PC-9 (cell line): ENCODE measurements at regions of chr2 and their contacts with region 1.

Region 1: DNA sequence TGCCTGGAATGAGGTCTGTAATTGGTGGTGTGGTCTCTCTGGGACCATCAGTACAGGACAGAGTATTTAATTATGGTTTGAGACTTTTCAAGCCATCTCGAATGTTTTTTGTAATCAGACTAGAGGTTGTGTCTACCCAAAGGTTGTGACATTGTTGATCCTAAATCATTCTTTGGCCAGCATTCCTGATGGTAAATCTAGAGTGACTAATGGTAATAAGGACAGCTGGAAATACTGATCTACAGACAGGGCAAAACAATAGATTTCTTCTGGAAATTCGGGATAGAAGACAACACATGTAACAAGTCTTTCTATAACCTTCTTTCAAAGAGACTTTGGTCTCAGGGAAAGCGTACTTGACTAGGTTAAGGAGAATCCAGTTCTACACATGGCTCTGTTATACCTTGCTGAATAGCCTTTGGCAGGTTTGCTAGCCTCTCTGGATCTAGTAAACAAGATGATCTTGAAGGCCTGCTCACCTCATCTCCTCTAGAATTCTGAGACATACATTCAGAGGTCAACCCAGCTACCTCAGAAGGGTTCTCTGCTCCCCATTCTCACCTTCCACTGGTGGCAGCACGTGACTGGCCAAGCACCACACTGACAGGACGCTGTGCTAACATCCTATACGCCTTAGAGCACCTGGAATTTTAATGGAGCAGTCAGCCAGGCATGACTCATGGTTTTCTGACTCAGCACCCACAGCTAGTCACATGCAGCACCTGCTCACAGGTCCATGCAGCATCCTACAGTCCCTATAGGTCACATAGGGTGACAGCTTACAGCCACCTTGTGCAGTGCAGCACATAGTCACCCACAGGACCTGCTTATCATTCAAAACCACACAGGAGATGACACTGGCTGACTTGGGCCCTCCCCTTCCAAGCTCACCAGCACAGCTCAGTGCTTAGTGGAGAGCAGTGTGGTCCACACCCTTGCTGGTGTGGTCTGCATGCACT is 12.2 kb downstream of the PLB1 start:
- DNase-seq: peak; percentile 76 to 97
- H3K4me3 ChIP-seq: no peak overlapping the region
- H3K27ac ChIP-seq: peak overlapping the region; percentile 42
- H3K4me1 ChIP-seq: peaks cover 19% of the 10 kb centered on the region
- H3K27me3 ChIP-seq: no peaks in the 10 kb centered on the region
- CTCF ChIP-seq: no peak

Region 2: GRCh38 chr2:28406276-28407096 is 101.6 kb before region 1 on chr2:
- CTCF ChIA-PET with region 1: no interaction called
- POLR2A ChIA-PET with region 1: no interaction called
- intact Hi-C with region 1: loop called (anchors 5 kb)
- DNase-seq: peak in 1 of 2 experiments; percentile 84
- H3K4me3 ChIP-seq: no peak overlapping the region
- H3K27ac ChIP-seq: peak overlapping the region; percentile 23; the same call in 1 of the 2 replicates
- H3K4me1 ChIP-seq: no peaks in the 10 kb centered on the region
- H3K27me3 ChIP-seq: no peaks in the 10 kb centered on the region
- CTCF ChIP-seq: no peak

Region 3: DNA sequence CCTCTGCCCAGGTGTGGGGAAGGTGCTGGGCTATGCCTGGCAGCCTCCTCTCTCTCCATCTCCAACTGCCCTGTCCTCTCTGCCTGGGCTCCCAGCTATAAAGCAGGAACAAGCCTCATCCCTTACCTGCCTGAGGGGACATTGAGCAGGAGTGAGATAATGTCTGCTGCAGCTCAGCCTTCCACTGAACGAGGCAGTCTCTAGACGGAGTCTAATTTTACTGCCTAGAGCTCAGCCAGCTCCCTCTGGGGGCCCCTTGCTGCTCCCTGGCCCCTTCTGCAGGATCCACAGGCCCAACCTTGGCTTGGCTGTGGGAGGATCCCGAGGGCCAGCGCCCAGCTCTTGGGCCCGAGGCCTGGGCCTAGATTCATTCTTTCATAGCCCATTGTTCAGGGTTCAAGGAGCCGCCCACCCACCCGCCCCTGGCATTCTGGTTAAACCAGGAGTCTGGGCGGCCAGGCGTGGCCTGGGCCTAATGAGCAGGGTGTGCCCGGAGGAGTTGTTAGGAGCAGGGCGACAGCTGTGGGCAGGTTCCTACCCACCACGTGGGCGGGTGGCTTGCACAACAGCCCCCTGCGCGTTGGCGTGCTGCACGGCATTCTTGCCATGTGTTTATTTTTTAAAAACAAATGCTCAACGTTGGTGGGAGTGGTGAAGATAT is 70.8 kb before region 1 on chr2:
- CTCF ChIA-PET with region 1: no interaction called
- POLR2A ChIA-PET with region 1: no interaction called
- intact Hi-C with region 1: loop called (anchors 2 kb)
- DNase-seq: peak; percentile 82 to 90
- H3K4me3 ChIP-seq: peak overlapping the region; percentile 27; the same call in 1 of the 2 replicates
- H3K27ac ChIP-seq: peak overlapping the region; percentile 93
- H3K4me1 ChIP-seq: peaks cover 39% of the 10 kb centered on the region
- H3K27me3 ChIP-seq: no peaks in the 10 kb centered on the region
- CTCF ChIP-seq: no peak

Region 4: DNA sequence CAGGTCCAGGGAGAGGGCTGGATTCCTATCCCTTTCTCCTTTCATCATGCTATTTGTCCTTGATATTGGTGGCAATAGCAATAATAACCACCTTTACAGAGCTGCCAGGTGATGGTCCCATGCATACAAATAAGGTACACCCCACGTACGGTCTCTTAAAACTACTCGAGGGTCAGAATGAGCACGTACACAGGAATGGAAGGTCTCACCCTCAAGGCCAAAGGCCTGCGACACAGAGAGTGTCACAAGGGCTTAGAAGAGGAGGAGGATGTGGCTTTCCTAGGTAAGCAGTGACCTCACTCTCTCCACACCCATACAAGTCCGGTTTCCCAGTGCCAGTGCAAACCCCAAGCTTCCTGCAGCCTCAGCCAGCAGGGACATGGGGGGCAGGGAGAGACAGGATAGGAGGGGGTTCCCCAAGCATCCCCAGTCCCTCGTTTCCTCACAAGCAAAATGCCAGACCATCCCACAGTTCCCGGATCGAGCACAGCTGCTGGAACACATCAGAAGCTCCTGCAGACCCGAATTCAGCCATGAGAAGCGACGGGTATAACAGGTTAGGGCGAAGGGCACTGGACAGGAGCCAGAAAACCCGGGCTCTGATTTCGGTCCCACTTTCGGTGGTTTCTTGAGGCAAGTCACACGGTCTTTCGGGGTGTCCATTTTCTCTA is 37.0 kb after region 1 on chr2:
- CTCF ChIA-PET with region 1: interaction called, 3 read pairs
- POLR2A ChIA-PET with region 1: no interaction called
- intact Hi-C with region 1: loop called (anchors 5 kb)
- DNase-seq: peak; percentile 48 to 82
- H3K4me3 ChIP-seq: peak overlapping the region; percentile 25; the same call in 1 of the 2 replicates
- H3K27ac ChIP-seq: peak overlapping the region; percentile 82
- H3K4me1 ChIP-seq: peaks cover 40% of the 10 kb centered on the region
- H3K27me3 ChIP-seq: no peaks in the 10 kb centered on the region
- CTCF ChIP-seq: no peak